Heart right ventricle (tissue), 16 donors: ENCODE measurements at regions of chr10 and their contacts with region 1.

Region 1: DNA sequence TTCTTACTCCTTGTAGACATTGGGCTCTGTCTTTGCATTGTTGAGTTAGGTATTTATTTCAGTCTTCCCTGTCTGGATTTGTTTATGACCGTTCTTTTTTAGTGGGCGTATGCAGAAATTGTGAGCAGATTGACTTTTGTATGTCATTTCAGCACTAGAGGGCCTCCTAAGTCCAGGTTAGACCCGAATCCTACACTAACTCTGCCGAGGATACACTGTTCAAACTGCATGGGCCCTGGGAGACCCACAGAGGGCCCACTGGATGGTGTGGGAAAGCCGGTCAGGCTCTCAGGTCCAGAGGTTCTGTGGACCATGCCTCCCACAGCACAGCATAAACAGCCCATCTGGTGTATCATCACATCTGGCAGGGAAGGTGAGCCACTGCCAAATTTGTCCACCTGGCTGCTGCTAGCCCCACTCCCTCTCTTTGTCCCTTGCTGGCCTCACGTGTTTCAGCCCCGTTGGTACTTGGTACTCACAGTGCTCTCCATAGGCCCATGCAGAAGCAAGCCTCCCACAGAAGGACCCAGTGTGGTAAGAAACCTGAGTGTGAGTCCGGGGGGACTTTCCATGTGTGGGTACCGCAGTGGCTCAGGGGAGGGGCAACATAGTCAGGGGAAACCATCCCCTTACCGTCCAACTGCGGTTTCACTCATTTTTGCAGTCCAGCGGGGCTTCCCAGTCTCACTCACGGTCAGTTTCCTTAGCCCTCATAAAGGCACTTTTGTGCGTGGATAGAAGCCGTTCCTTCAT is 112.8 kb downstream of the APBB1IP start:
- DNase-seq: no peak
- ATAC-seq: no peak
- H3K4me3 ChIP-seq: no peak overlapping the region
- H3K27ac ChIP-seq: no peak overlapping the region
- H3K4me1 ChIP-seq: peaks cover 0 to 15% (median 0%) of the 10 kb centered on the region in 9 donors
- H3K27me3 ChIP-seq: peaks cover 0 to 14% (median 0%) of the 10 kb centered on the region in 7 donors
- CTCF ChIP-seq: no peak

Region 2: GRCh38 chr10:25875556-25876165 is 675.3 kb before region 1 on chr10:
- intact Hi-C with region 1: loop called in 8 of 10 experiments (anchors 5 to 10 kb)
- DNase-seq: peak; percentile 40 to 61
- ATAC-seq: peak in 1 of 8 donors; percentile 53
- H3K4me3 ChIP-seq: no peak overlapping the region
- H3K27ac ChIP-seq: no peak overlapping the region
- H3K4me1 ChIP-seq: no peaks in the 10 kb centered on the region
- H3K27me3 ChIP-seq: no peaks in the 10 kb centered on the region
- CTCF ChIP-seq: peak; percentile 66 to 89 (median 84)

Region 3: GRCh38 chr10:26334932-26335573 is 215.9 kb before region 1 on chr10:
- intact Hi-C with region 1: loop called in 8 of 10 experiments (anchors 2 to 5 kb)
- DNase-seq: peak in 1 of 2 donors; percentile 30
- ATAC-seq: peak in 6 of 8 donors; percentile 51 to 80 (median 63)
- H3K4me3 ChIP-seq: peak overlapping the region in 2 of 10 donors; percentile 13 to 45
- H3K27ac ChIP-seq: peak overlapping the region in 1 of 10 donors; percentile 52
- H3K4me1 ChIP-seq: peaks cover 0 to 4% (median 0%) of the 10 kb centered on the region in 9 donors
- H3K27me3 ChIP-seq: no peaks in the 10 kb centered on the region
- CTCF ChIP-seq: peak; percentile 31 to 75 (median 63)